Caco-2 (cell line): ENCODE measurements at regions of chr4 and their contacts with region 1.

Region 1: GRCh38 chr4:48315728-48316630 is 25.4 kb upstream of the SLAIN2 start:
- DNase-seq: peak in 1 of 2 experiments; percentile 50
- H3K4me3 ChIP-seq: no peak overlapping the region
- H3K4me3 Mint-ChIP-seq: no peak overlapping the region
- H3K27ac Mint-ChIP-seq: no peak overlapping the region
- H3K4me1 ChIP-seq: no peaks in the 10 kb centered on the region
- H3K4me1 Mint-ChIP-seq: peaks cover under 1% of the 10 kb centered on the region
- H3K27me3 ChIP-seq: no peaks in the 10 kb centered on the region
- H3K27me3 Mint-ChIP-seq: no peaks in the 10 kb centered on the region
- CTCF ChIP-seq: peak; percentile 59 to 60

Region 2: DNA sequence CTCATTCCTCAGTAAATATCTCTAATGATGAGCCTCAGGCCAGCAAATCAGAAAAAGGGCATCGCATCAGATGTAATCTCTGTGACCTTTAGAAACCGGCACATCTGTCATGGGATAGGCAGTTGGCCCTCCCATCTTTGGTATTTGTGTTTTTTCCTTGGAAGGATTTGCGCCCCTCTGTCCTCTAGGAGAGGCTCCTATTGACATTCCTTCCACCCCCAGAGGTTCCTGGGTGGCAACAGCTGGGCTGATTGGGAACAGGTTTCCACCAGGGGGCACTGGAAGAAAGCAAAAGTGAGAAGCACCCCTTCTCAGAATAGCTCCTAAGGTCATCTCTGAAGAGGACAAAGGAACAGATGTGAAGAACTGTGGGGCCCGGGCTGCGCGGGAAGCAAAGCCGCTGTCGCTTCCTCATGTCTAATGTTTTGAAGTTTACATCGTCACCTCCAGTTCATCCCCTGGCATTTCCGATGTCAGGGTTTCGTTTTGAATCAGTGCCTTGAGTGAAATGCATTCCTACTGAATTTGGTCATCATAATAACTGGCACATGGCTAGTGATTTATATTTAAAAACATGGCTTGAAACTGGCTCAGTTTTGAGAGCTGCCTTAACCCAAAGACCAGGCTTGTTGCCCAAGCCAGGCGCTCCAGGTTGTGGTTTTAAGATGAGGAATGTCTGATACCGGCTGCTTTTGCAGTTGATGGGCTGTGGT is 188.1 kb before region 1 on chr4:
- CTCF ChIA-PET with region 1: no interaction called
- POLR2A ChIA-PET with region 1: no interaction called
- intact Hi-C with region 1: loop called (anchors 1 kb)
- DNase-seq: peak; percentile 88 to 89
- H3K4me3 ChIP-seq: no peak overlapping the region
- H3K4me3 Mint-ChIP-seq: peak overlapping the region; percentile 66
- H3K27ac Mint-ChIP-seq: peak overlapping the region; percentile 94
- H3K4me1 ChIP-seq: peaks cover 59% of the 10 kb centered on the region
- H3K4me1 Mint-ChIP-seq: peaks cover 41% of the 10 kb centered on the region
- H3K27me3 ChIP-seq: no peaks in the 10 kb centered on the region
- H3K27me3 Mint-ChIP-seq: no peaks in the 10 kb centered on the region
- CTCF ChIP-seq: peak; percentile 72 to 77

Region 3: DNA sequence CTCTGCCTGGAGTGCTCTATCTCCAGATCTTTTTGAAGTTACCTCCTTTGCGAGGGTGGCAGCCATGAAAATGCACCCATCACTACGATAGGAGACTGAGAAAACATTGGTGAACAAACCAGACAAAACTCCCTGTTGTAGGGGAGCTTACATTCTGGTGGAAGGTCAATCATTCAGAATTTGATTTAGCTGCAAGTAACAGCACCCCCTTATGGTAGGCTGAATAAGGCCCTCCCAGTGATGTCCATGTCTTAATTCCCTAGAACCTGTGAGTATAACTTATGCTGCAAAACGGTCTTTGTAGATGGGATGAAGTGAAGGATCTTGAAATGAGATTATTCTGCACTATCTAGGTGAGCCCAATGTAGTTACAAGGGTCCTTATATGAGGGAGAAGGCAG is 40.7 kb before region 1 on chr4:
- CTCF ChIA-PET with region 1: no interaction called
- POLR2A ChIA-PET with region 1: no interaction called
- intact Hi-C with region 1: no loop called
- DNase-seq: peak in 1 of 2 experiments; percentile 10
- H3K4me3 ChIP-seq: no peak overlapping the region
- H3K4me3 Mint-ChIP-seq: no peak overlapping the region
- H3K27ac Mint-ChIP-seq: no peak overlapping the region
- H3K4me1 ChIP-seq: 0 out of 2 replicates have a peak, but pooled peaks cover 5% of the 10 kb centered on the region
- H3K4me1 Mint-ChIP-seq: peaks cover 6% of the 10 kb centered on the region
- H3K27me3 ChIP-seq: no peaks in the 10 kb centered on the region
- H3K27me3 Mint-ChIP-seq: no peaks in the 10 kb centered on the region
- CTCF ChIP-seq: peak; percentile 25 to 32

Region 4: GRCh38 chr4:48296365-48296764 is 19.6 kb before region 1 on chr4:
- CTCF ChIA-PET with region 1: no interaction called
- POLR2A ChIA-PET with region 1: no interaction called
- intact Hi-C with region 1: no loop called
- DNase-seq: no peak
- H3K4me3 ChIP-seq: no peak overlapping the region
- H3K4me3 Mint-ChIP-seq: no peak overlapping the region
- H3K27ac Mint-ChIP-seq: no peak overlapping the region
- H3K4me1 ChIP-seq: no peaks in the 10 kb centered on the region
- H3K4me1 Mint-ChIP-seq: no peaks in the 10 kb centered on the region
- H3K27me3 ChIP-seq: no peaks in the 10 kb centered on the region
- H3K27me3 Mint-ChIP-seq: peaks cover under 1% of the 10 kb centered on the region
- CTCF ChIP-seq: no peak

Region 5: DNA sequence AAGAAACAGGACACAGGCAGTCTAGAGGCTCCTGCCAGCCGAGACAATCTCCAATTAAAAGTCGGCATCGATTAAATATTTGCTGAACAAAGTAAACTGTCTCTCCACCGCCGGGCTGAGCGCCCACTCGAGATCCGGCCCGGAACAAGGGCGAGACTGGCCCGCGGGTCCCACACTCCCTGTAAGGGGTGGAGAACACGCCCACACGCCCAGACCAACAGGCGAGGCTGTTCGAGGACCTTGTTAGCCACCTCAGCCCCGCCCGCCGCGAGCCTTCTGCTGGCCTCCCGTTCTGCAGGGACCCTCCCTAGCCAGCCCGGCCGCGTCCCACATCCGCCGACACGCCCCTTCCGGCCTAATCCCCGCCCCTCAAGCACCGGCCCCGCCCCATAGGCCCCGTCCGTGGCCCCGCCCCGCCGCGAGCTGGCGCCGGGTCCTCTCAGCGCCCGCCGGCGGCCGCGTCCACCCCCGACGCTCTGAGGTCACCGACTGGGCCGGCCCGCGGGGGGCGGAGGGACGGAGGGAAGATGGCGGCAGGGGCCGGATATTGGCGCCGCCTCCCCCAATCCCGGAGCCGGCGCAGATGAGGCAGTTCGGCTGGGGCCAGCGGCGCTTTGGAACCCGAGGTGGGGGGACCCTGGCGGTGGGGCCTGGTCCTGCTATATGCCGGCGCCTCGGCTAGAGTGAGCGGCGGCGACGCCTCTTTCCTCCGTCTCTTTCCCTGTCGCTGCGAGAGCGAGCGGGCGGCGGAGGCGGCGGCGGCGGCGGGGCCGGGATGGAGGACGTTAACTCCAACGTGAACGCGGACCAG is 25.2 kb after region 1 on chr4 and contains the start of gene SLAIN2:
- CTCF ChIA-PET with region 1: interaction called, 4 read pairs
- POLR2A ChIA-PET with region 1: no interaction called
- intact Hi-C with region 1: loop called (anchors 1 kb)
- DNase-seq: peak; percentile 98 to 99
- H3K4me3 ChIP-seq: peak within 1 kb of the TSS; percentile 71
- H3K4me3 Mint-ChIP-seq: peak within 1 kb of the TSS; percentile 99
- H3K27ac Mint-ChIP-seq: peak within 1 kb of the TSS; percentile 95
- H3K4me1 ChIP-seq: peaks cover 34% of the 10 kb centered on the region
- H3K4me1 Mint-ChIP-seq: peaks cover 27% of the 10 kb centered on the region
- H3K27me3 ChIP-seq: no peaks in the 10 kb centered on the region
- H3K27me3 Mint-ChIP-seq: no peaks in the 10 kb centered on the region
- CTCF ChIP-seq: peak in 1 of 2 experiments; percentile 43
- total RNA-seq, gene SLAIN2: 44.8 and 46.6 TPM in 2 replicates

Region 6: GRCh38 chr4:48375651-48376293 is 59.8 kb after region 1 on chr4:
- CTCF ChIA-PET with region 1: no interaction called
- POLR2A ChIA-PET with region 1: no interaction called
- intact Hi-C with region 1: loop called (anchors 5 kb)
- DNase-seq: peak; percentile 21 to 41
- H3K4me3 ChIP-seq: no peak overlapping the region
- H3K4me3 Mint-ChIP-seq: peak overlapping the region; percentile 7
- H3K27ac Mint-ChIP-seq: peak overlapping the region; percentile 40
- H3K4me1 ChIP-seq: peaks cover 15% of the 10 kb centered on the region
- H3K4me1 Mint-ChIP-seq: peaks cover 20% of the 10 kb centered on the region
- H3K27me3 ChIP-seq: no peaks in the 10 kb centered on the region
- H3K27me3 Mint-ChIP-seq: no peaks in the 10 kb centered on the region
- CTCF ChIP-seq: no peak

Region 7: GRCh38 chr4:48420144-48420543 is 104.2 kb after region 1 on chr4:
- CTCF ChIA-PET with region 1: no interaction called
- POLR2A ChIA-PET with region 1: no interaction called
- intact Hi-C with region 1: loop called (anchors 5 kb)
- DNase-seq: no peak
- H3K4me3 ChIP-seq: no peak overlapping the region
- H3K4me3 Mint-ChIP-seq: no peak overlapping the region
- H3K27ac Mint-ChIP-seq: no peak overlapping the region
- H3K4me1 ChIP-seq: no peaks in the 10 kb centered on the region
- H3K4me1 Mint-ChIP-seq: no peaks in the 10 kb centered on the region
- H3K27me3 ChIP-seq: no peaks in the 10 kb centered on the region
- H3K27me3 Mint-ChIP-seq: no peaks in the 10 kb centered on the region
- CTCF ChIP-seq: no peak

Region 8: GRCh38 chr4:48483006-48483776 is 167.2 kb after region 1 on chr4 and contains the start of gene SLC10A4:
- CTCF ChIA-PET with region 1: no interaction called
- POLR2A ChIA-PET with region 1: no interaction called
- intact Hi-C with region 1: loop called (anchors 10 kb)
- DNase-seq: peak in 1 of 2 experiments; percentile 62
- H3K4me3 ChIP-seq: peak within 1 kb of the TSS; percentile 50
- H3K4me3 Mint-ChIP-seq: peak within 1 kb of the TSS; percentile 70
- H3K27ac Mint-ChIP-seq: no peak within 1 kb of the TSS
- H3K4me1 ChIP-seq: no peaks in the 10 kb centered on the region
- H3K4me1 Mint-ChIP-seq: no peaks in the 10 kb centered on the region
- H3K27me3 ChIP-seq: no peaks in the 10 kb centered on the region
- H3K27me3 Mint-ChIP-seq: no peaks in the 10 kb centered on the region
- CTCF ChIP-seq: no peak
- total RNA-seq, gene SLC10A4: 1.7 and 2.6 TPM in 2 replicates

Region 9: GRCh38 chr4:48546336-48546735 is 230.4 kb after region 1 on chr4:
- CTCF ChIA-PET with region 1: no interaction called
- POLR2A ChIA-PET with region 1: no interaction called
- intact Hi-C with region 1: loop called (anchors 1 kb)
- DNase-seq: peak; percentile 40 to 43
- H3K4me3 ChIP-seq: no peak overlapping the region
- H3K4me3 Mint-ChIP-seq: no peak overlapping the region
- H3K27ac Mint-ChIP-seq: no peak overlapping the region
- H3K4me1 ChIP-seq: no peaks in the 10 kb centered on the region
- H3K4me1 Mint-ChIP-seq: no peaks in the 10 kb centered on the region
- H3K27me3 ChIP-seq: no peaks in the 10 kb centered on the region
- H3K27me3 Mint-ChIP-seq: no peaks in the 10 kb centered on the region
- CTCF ChIP-seq: peak; percentile 66 to 73